Caco-2 (cell line): ENCODE measurements at regions of chr12 and their contacts with region 1.

Region 1: GRCh38 chr12:53321074-53321814 is at the start of gene AAAS:
- DNase-seq: peak; percentile 97
- H3K4me3 ChIP-seq: peak within 1 kb of the TSS; percentile 63
- H3K4me3 Mint-ChIP-seq: peak within 1 kb of the TSS; percentile 84
- H3K27ac Mint-ChIP-seq: peak within 1 kb of the TSS; percentile 84
- H3K4me1 ChIP-seq: peaks cover 20% of the 10 kb centered on the region
- H3K4me1 Mint-ChIP-seq: peaks cover 13% of the 10 kb centered on the region
- H3K27me3 ChIP-seq: no peaks in the 10 kb centered on the region
- H3K27me3 Mint-ChIP-seq: no peaks in the 10 kb centered on the region
- CTCF ChIP-seq: peak; percentile 98
- total RNA-seq, gene AAAS: 63.8 and 67.2 TPM in 2 replicates

Region 2: DNA sequence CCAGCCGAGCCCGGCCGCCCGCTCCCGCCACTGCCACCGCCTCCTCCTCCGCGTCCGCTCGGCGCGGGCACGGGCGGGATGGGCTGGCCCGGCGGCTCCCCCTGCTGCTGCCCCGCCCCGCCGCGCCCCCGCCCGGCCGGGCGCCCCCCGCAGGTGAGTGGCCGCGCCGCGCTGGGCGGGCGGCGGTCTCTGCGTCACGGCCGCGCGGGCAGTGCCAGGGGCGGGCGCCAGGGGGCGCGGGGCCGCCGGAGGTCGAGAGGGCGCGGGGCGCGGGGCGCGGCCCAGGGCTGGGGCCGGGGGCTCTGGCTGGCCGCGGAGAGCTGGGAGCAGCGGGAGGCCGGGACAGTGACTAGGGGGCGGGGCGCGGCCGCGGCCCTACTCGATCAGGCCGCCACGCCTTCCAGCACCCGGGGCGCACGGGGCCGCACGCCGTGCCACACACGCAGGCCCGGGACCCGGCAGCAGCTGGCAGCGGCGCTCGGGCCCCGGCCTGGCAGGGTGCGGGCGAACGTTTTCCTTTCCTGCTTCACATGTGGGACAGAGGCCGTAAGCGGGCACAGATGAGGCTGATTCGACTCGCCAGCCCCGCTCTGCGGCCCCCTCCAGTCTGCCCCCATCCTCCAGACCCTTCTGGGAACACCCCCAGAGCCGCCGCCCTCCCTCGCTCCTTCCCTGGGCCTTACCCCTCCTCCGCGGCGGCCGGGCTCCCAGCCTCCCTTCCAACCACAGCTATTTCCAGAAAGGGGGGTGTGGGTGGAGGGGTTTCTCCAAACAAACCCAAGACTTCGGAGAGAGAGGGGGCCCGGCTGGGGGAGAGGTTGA is 273.8 kb before region 1 on chr12:
- CTCF ChIA-PET with region 1: no interaction called
- POLR2A ChIA-PET with region 1: no interaction called
- intact Hi-C with region 1: no loop called
- DNase-seq: peak; percentile 39 to 80
- H3K4me3 ChIP-seq: peak overlapping the region; percentile 74; the same call in 1 of the 2 replicates
- H3K4me3 Mint-ChIP-seq: peak overlapping the region; percentile 87
- H3K27ac Mint-ChIP-seq: peak overlapping the region; percentile 82
- H3K4me1 ChIP-seq: peaks cover 75% of the 10 kb centered on the region
- H3K4me1 Mint-ChIP-seq: peaks cover 35% of the 10 kb centered on the region
- H3K27me3 ChIP-seq: no peaks in the 10 kb centered on the region
- H3K27me3 Mint-ChIP-seq: no peaks in the 10 kb centered on the region
- CTCF ChIP-seq: peak in 1 of 2 experiments; percentile 5

Region 3: DNA sequence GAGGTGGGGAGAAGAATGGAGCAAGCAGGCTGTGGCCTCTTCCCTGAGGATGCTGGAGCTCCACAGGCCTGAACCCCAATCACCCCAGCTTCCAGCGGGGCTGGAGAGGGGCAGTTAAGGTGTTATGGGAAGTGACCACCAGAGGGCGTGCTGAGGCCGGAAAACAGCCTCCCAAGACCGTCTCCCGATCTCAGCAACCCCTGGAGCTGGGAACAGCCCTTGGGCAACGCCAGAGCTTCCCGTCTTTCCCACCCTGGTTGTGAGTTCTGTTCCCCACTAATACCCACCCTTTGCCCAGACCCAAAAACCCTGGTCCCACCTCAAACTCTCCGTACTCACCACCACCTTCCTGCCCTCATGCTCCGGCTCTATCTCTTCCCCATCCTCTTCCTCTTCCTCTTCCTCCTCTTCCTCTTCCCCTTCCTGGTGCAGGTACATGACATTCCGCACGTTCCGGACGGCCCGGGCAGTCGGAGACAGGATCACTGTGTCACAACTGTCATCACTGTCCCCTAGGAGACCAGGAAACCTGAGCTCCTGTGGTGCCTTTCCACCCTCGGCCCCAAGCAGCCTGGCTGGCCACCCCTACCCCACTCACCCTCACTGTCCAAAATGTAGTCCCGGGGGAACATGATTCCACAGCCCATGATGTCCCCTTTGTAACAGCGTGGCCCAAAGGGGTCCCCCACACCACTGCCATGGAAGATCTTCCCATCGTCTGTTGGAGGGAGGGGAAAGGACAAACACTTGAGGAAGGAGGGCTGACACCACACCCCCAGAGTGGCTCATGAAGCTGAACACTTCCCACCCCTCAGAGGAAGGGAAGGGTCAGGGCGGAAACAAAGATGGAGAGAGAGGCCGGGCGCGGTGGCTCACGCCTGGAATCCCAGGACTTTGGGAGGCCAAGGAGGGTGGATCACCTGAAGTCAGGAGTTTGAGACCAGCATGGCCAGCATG is 255.0 kb before region 1 on chr12:
- CTCF ChIA-PET with region 1: interaction called, 12 read pairs
- POLR2A ChIA-PET with region 1: no interaction called
- intact Hi-C with region 1: no loop called
- DNase-seq: peak; percentile 79 to 83
- H3K4me3 ChIP-seq: no peak overlapping the region
- H3K4me3 Mint-ChIP-seq: peak overlapping the region; percentile 31
- H3K27ac Mint-ChIP-seq: peak overlapping the region; percentile 14
- H3K4me1 ChIP-seq: peaks cover 7% of the 10 kb centered on the region
- H3K4me1 Mint-ChIP-seq: peaks cover 6% of the 10 kb centered on the region
- H3K27me3 ChIP-seq: no peaks in the 10 kb centered on the region
- H3K27me3 Mint-ChIP-seq: no peaks in the 10 kb centered on the region
- CTCF ChIP-seq: peak; percentile 76 to 86

Region 4: GRCh38 chr12:53213348-53213747 is 107.9 kb before region 1 on chr12:
- CTCF ChIA-PET with region 1: interaction called, 26 read pairs
- POLR2A ChIA-PET with region 1: no interaction called
- intact Hi-C with region 1: no loop called
- DNase-seq: peak; percentile 80 to 91
- H3K4me3 ChIP-seq: no peak overlapping the region
- H3K4me3 Mint-ChIP-seq: no peak overlapping the region
- H3K27ac Mint-ChIP-seq: no peak overlapping the region
- H3K4me1 ChIP-seq: peaks cover 7% of the 10 kb centered on the region; the same call in 1 of the 2 replicates
- H3K4me1 Mint-ChIP-seq: peaks cover 14% of the 10 kb centered on the region
- H3K27me3 ChIP-seq: no peaks in the 10 kb centered on the region
- H3K27me3 Mint-ChIP-seq: no peaks in the 10 kb centered on the region
- CTCF ChIP-seq: peak; percentile 96 to 97

Region 5: GRCh38 chr12:53344824-53345485 is 23.7 kb after region 1 on chr12:
- CTCF ChIA-PET with region 1: interaction called, 63 read pairs
- POLR2A ChIA-PET with region 1: interaction called, 9 read pairs
- intact Hi-C with region 1: loop called (anchors 1 kb)
- DNase-seq: peak; percentile 73 to 84
- H3K4me3 ChIP-seq: peak overlapping the region; percentile 69
- H3K4me3 Mint-ChIP-seq: peak overlapping the region; percentile 97
- H3K27ac Mint-ChIP-seq: peak overlapping the region; percentile 77
- H3K4me1 ChIP-seq: no peaks in the 10 kb centered on the region
- H3K4me1 Mint-ChIP-seq: peaks cover 6% of the 10 kb centered on the region
- H3K27me3 ChIP-seq: no peaks in the 10 kb centered on the region
- H3K27me3 Mint-ChIP-seq: no peaks in the 10 kb centered on the region
- CTCF ChIP-seq: peak; percentile 64 to 91

Region 6: GRCh38 chr12:53358844-53359431 is 37.7 kb after region 1 on chr12:
- CTCF ChIA-PET with region 1: interaction called, 24 read pairs
- POLR2A ChIA-PET with region 1: interaction called, 12 read pairs
- intact Hi-C with region 1: no loop called
- DNase-seq: no peak
- H3K4me3 ChIP-seq: no peak overlapping the region
- H3K4me3 Mint-ChIP-seq: no peak overlapping the region
- H3K27ac Mint-ChIP-seq: no peak overlapping the region
- H3K4me1 ChIP-seq: no peaks in the 10 kb centered on the region
- H3K4me1 Mint-ChIP-seq: no peaks in the 10 kb centered on the region
- H3K27me3 ChIP-seq: no peaks in the 10 kb centered on the region
- H3K27me3 Mint-ChIP-seq: no peaks in the 10 kb centered on the region
- CTCF ChIP-seq: no peak

Region 7: DNA sequence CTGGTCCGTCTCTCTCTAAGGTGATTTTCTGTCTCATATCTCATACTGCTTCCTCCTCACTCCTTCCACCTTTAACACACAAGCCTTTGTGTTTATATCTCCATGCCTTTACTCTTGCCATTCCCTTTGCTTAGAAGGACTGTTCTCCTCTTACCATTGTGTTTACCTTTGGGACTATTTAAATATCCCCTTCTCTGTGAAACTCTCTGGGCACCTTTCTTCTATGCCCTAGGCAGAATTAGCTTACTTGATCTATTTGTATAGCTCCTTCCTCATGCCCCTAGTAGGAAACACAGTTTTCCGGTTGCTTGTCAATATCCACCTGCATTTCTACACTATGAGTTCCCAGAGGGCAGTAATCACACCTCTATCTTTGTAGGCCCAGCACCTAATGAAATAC is 98.5 kb after region 1 on chr12:
- CTCF ChIA-PET with region 1: interaction called, 29 read pairs
- POLR2A ChIA-PET with region 1: interaction called, 7 read pairs
- intact Hi-C with region 1: loop called (anchors 1 kb)
- DNase-seq: no peak
- H3K4me3 ChIP-seq: no peak overlapping the region
- H3K4me3 Mint-ChIP-seq: no peak overlapping the region
- H3K27ac Mint-ChIP-seq: no peak overlapping the region
- H3K4me1 ChIP-seq: peaks cover 14% of the 10 kb centered on the region
- H3K4me1 Mint-ChIP-seq: peaks cover 22% of the 10 kb centered on the region
- H3K27me3 ChIP-seq: no peaks in the 10 kb centered on the region
- H3K27me3 Mint-ChIP-seq: no peaks in the 10 kb centered on the region
- CTCF ChIP-seq: no peak

Region 8: DNA sequence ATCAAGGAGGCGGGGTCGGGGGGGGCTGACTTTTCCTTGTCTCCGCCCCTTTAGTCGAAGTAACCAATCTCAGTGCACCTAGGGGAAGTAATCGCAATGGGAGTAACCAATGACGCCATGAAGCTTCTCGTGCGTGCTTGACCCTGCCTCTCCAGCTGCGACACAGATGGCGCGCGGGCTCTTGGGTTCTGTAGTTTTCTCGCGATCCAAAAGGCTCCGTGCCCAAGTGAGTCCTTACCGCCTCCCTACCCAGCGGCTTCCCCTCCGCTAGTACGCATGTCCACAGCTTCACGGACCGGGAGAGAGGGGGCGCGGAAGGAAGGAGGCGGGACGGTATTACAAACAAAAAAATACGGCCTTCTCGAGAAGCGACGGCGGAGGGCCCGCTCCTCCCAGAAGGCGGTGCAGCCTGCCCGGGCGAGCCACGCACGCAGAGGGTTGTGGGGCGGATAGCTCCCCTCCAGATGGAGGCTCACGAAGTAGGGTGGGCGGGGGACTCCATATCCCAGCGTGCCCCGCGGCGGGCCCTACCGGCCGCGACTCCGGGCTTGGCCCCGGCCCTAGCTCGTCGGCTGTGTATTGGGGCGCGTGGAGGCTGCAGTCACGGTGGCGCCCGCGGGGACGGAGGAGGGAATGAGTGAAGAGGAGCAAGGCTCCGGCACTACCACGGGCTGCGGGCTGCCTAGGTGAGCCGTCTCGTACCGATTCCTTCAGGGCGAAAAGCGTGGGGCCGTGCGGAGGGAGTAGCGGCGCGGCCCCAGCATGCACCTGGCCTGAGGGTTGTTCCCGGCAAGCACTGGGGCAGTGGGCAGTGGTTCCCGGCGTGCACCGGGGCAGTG is 179.8 kb after region 1 on chr12 and contains the start of gene TARBP2:
- CTCF ChIA-PET with region 1: interaction called, 18 read pairs
- POLR2A ChIA-PET with region 1: interaction called, 20 read pairs
- intact Hi-C with region 1: loop called (anchors 2 kb)
- DNase-seq: peak; percentile 97 to 98
- H3K4me3 ChIP-seq: peak within 1 kb of the TSS; percentile 63
- H3K4me3 Mint-ChIP-seq: peak within 1 kb of the TSS; percentile 80
- H3K27ac Mint-ChIP-seq: peak within 1 kb of the TSS; percentile 86
- H3K4me1 ChIP-seq: peaks cover 16% of the 10 kb centered on the region
- H3K4me1 Mint-ChIP-seq: peaks cover 31% of the 10 kb centered on the region
- H3K27me3 ChIP-seq: no peaks in the 10 kb centered on the region
- H3K27me3 Mint-ChIP-seq: no peaks in the 10 kb centered on the region
- CTCF ChIP-seq: no peak
- total RNA-seq, gene TARBP2: 43.9 and 50.7 TPM in 2 replicates